Activated B cell treated with CpG ODN at 0.5 μM for 24 hours (primary cell): ENCODE measurements at regions of chr19 and their contacts with region 1.

Region 1: DNA sequence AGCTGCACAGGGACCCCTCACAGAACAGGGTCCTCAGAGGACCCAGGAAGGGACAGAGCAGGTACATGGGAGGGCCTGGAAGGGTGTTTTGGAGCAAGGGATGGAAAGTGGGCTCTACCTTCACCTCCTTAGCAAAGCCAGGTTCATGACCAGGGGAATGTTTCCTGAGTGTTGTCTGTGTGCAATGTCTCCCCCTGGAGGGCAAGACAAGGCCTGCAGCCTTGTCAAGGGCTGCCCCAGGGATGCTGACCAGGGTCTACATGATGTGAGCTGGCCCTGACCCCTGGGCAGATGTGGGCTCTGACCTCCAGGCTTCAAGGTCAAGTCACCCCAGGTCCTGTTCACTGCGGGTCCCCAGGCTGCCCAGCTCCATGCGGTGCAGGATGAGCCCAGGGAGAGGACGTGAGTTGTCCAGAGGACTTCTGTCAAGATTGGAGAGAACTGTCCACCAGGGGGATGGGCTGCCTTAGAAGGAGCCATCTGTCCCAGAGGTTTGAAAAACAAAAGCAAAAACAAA is 1.0 kb upstream of the CEACAM1 start:
- DNase-seq: peak; percentile 68
- ATAC-seq: peak; percentile 87
- H3K4me3 Mint-ChIP-seq: peak overlapping the region; percentile 70
- H3K27ac Mint-ChIP-seq: peak overlapping the region; percentile 80
- H3K4me1 Mint-ChIP-seq: peaks cover 34% of the 10 kb centered on the region
- H3K27me3 Mint-ChIP-seq: no peaks in the 10 kb centered on the region
- CTCF ChIP-seq: peak; percentile 63

Region 2: GRCh38 chr19:42450314-42450934 is 78.9 kb before region 1 on chr19:
- CTCF ChIA-PET with region 1: interaction called, 142 read pairs
- POLR2A ChIA-PET with region 1: interaction called, 30 read pairs
- intact Hi-C with region 1: loop called (anchors 1 kb)
- DNase-seq: peak; percentile 50
- ATAC-seq: peak; percentile 99
- H3K4me3 Mint-ChIP-seq: no peak overlapping the region
- H3K27ac Mint-ChIP-seq: no peak overlapping the region
- H3K4me1 Mint-ChIP-seq: peaks cover 14% of the 10 kb centered on the region
- H3K27me3 Mint-ChIP-seq: peaks cover 2% of the 10 kb centered on the region
- CTCF ChIP-seq: peak; percentile 77

Region 3: DNA sequence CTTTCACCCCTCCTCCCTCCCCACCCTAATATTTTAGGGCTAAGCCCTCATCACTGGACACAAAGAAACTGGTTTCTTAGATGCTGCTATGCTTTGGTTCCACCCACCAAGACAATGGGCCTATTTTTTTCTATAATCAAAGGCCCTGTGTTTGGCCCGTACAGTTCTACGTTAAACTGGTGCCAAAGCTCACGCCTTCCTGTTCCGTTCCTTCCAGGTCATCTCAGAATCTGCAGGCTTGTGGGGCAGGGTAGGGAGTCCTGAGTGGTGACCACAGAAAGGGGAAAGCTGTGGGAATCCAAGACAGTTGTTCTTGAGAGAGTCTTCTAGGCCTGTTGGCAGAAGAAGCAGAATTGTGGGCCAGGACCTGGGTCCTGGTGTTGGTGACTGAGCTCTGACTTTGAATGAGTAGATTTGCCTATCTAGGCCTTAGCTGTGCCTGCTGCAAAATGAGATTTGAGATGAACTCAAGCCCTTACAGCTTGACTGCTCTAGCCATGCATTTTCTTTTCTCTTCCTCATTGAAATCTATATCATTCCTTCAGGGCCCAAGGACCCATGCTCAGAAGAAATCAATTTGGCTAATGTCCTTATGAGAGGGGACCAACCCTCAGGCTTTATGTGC is 67.5 kb before region 1 on chr19:
- CTCF ChIA-PET with region 1: interaction called, 78 read pairs
- POLR2A ChIA-PET with region 1: interaction called, 43 read pairs
- intact Hi-C with region 1: loop called (anchors 1 kb)
- DNase-seq: no peak
- ATAC-seq: no peak
- H3K4me3 Mint-ChIP-seq: no peak overlapping the region
- H3K27ac Mint-ChIP-seq: peak overlapping the region; percentile 50
- H3K4me1 Mint-ChIP-seq: peaks cover 47% of the 10 kb centered on the region
- H3K27me3 Mint-ChIP-seq: no peaks in the 10 kb centered on the region
- CTCF ChIP-seq: no peak

Region 4: DNA sequence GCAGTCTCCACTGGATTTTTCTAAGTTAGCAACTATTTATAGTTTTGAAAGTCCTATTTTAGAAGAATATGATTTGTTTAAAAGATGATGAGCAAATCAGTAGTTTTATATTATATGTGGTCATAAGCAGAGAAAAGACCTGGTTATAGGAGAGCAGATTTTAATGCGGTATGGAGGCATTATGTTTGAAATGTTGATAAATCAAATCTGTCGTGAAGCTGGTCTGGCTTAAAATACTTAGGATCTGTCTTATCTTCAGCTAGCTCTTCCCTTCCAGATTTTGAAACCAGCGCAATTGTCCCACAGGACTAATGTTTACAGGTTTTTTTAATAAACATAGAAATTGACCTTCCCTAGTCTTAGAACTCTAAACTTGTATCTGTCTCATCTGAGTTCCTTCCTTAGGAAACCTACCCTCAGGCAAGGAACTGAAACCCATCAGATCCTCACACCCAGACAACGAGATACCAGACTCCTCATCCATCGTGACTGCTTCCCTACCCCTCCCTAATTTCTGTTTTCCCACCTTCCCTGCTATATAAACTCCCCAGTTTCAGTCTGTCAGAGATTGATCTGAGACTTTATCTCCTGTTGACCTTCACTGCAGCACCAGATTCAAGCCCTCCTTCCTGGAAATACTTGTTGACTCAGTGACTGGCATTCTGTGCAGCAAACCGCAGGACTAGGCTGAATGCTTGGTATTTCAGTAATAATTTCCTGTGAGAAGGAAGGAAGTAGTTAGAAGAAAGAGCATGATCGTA is 48.8 kb before region 1 on chr19:
- CTCF ChIA-PET with region 1: no interaction called
- POLR2A ChIA-PET with region 1: no interaction called
- intact Hi-C with region 1: no loop called
- DNase-seq: no peak
- ATAC-seq: peak; percentile 49
- H3K4me3 Mint-ChIP-seq: peak overlapping the region; percentile 17
- H3K27ac Mint-ChIP-seq: peak overlapping the region; percentile 13
- H3K4me1 Mint-ChIP-seq: peaks cover 16% of the 10 kb centered on the region
- H3K27me3 Mint-ChIP-seq: no peaks in the 10 kb centered on the region
- CTCF ChIP-seq: no peak

Region 5: DNA sequence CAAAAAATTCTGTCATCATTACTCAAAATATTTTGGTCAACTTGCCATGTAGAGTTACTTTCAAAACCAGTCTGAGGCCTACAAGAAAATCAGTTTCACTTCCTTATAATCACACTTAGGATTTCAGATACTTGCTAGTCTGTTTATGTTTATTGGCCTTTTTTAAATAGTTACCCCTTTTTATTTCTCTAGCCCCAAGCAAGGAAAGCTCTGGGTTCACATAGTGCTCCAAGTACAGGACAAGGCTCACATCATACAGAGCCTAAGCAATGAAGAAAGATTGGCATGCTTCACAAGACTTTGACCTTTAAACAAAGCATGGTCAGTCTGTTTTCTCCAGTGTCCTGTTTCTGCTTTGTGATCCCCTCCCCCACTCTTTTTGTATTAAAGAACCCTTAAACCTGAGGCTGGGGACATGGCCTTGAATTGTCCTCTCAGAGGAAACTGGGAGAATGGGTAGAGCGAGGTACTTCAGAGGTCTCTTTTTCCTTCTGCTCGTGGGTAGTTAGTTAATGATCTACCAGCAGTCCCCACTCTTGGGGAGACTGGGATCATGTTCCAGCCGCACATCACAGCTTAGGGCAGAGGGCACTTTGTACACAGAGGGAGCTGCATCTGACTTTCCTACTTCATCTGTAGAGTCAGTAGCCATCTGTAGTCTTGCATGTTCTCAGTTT is 31.7 kb before region 1 on chr19:
- CTCF ChIA-PET with region 1: interaction called, 13 read pairs
- POLR2A ChIA-PET with region 1: no interaction called
- intact Hi-C with region 1: loop called (anchors 5 kb)
- DNase-seq: no peak
- ATAC-seq: peak; percentile 72
- H3K4me3 Mint-ChIP-seq: peak overlapping the region; percentile 45
- H3K27ac Mint-ChIP-seq: peak overlapping the region; percentile 86
- H3K4me1 Mint-ChIP-seq: peaks cover 32% of the 10 kb centered on the region
- H3K27me3 Mint-ChIP-seq: no peaks in the 10 kb centered on the region
- CTCF ChIP-seq: no peak